ENCODE measurements at regions of chr5 and their contacts with region 1.

Region 1: GRCh38 chr5:173615884-173616576 is 420 bp downstream of the BOD1 start:
- DNase-seq: peak; percentile 66 to 86 (median 73)
- H3K4me3 ChIP-seq: peak overlapping the region; percentile 36 to 93 (median 89)
- H3K27ac ChIP-seq: peak overlapping the region; percentile 84 to 96 (median 93)
- H3K4me1 ChIP-seq: peaks cover 9 to 48% of the 10 kb centered on the region in 2 donors
- H3K27me3 ChIP-seq: no peaks in the 10 kb centered on the region
- CTCF ChIP-seq: peak; percentile 49 to 71 (median 60)
- POLR2A ChIP-seq: peak in 1 of 2 donors; percentile 55

Region 2: DNA sequence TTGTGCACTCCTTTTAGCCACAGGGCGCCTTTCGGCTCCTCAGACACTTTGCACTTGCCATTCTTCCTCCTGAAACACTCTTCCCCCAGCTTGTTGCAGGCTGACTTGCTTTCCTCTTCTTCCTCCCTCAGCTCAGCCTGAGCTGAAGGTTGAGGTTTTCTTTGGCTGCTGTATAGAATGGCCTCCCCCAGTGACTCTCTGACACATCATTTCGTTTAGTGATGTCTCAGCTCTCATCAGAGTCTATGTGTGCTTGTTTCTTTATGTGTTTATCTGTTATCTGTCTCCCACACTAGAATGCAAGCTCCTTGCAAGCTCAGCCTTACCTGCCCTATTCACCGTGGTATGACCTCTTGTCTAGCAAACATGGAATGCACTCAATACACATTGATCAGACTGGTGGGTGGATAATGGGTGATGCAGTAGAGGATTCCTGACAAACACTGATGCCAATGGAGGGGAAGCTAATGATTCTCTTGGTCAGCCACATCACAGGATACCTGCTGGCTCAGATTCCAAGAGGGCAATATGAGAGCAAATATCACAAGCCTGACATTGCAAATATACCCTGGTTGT is 174.9 kb before region 1 on chr5:
- intact Hi-C with region 1: no loop called
- DNase-seq: no peak
- H3K4me3 ChIP-seq: no peak overlapping the region
- H3K27ac ChIP-seq: no peak overlapping the region
- H3K4me1 ChIP-seq: no peaks in the 10 kb centered on the region
- H3K27me3 ChIP-seq: no peaks in the 10 kb centered on the region
- CTCF ChIP-seq: no peak
- POLR2A ChIP-seq: no peak

Region 3: GRCh38 chr5:173530547-173530946 is 85.5 kb before region 1 on chr5:
- intact Hi-C with region 1: no loop called
- DNase-seq: no peak
- H3K4me3 ChIP-seq: no peak overlapping the region
- H3K27ac ChIP-seq: no peak overlapping the region
- H3K4me1 ChIP-seq: no peaks in the 10 kb centered on the region
- H3K27me3 ChIP-seq: no peaks in the 10 kb centered on the region
- CTCF ChIP-seq: no peak
- POLR2A ChIP-seq: no peak

Region 4: GRCh38 chr5:173972925-173973615 is 357.0 kb after region 1 on chr5:
- intact Hi-C with region 1: loop called (anchors 2 kb)
- DNase-seq: peak; percentile 84 to 96 (median 92)
- H3K4me3 ChIP-seq: peak overlapping the region in 3 of 4 donors; percentile 2 to 64 (median 50)
- H3K27ac ChIP-seq: peak overlapping the region in 3 of 5 donors; percentile 51 to 80 (median 71)
- H3K4me1 ChIP-seq: peaks cover 4 to 7% of the 10 kb centered on the region in 2 donors
- H3K27me3 ChIP-seq: no peaks in the 10 kb centered on the region
- CTCF ChIP-seq: peak; percentile 88 to 97 (median 94)
- POLR2A ChIP-seq: peak in 1 of 2 donors; percentile 47

Region 5: GRCh38 chr5:173984218-173984617 is 368.2 kb after region 1 on chr5:
- intact Hi-C with region 1: loop called in 1 of 2 experiments (anchors 5 kb)
- DNase-seq: no peak
- H3K4me3 ChIP-seq: no peak overlapping the region
- H3K27ac ChIP-seq: no peak overlapping the region
- H3K4me1 ChIP-seq: no peaks in the 10 kb centered on the region
- H3K27me3 ChIP-seq: no peaks in the 10 kb centered on the region
- CTCF ChIP-seq: peak in 5 of 6 experiments; percentile 47 to 59 (median 54)
- POLR2A ChIP-seq: no peak

Region 6: DNA sequence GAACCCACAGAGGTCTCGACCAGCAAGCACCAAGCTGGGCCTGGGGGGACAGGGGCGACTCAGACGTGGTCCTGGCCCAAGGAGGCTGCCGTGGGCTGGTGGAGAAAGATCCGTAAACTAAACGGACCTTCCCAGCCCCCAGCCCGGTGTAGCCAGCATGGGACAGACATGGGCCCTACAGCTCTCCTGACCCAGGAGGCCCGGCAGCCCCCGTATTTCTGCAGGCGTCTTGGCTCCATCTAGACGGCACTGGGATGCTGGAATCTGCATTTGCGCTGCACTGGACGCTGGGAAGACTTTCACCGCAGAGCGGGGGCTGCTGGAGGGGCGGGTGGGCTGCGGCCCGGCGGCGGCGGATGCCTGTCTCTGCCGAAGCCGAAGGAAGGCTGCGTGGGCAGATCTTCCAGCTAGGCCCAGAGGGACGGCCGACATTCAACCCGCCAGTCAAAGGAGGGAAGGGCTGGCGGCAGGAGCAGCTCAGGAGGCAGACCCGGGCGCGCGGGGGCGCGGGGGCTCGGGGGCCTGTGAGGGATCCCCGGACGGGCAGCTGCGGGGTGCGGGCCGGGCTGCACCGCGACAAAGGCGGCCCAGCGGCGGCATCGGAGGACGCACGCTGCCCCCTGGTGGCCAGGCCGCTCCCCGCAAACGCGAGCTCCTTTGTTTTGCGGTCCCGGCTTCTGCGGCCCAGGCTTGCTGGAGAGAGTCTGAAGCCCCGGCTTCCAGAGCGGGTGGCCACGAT is 695.7 kb after region 1 on chr5:
- intact Hi-C with region 1: loop called in 1 of 2 experiments (anchors 5 kb)
- DNase-seq: peak; percentile 40 to 82 (median 74)
- H3K4me3 ChIP-seq: peak overlapping the region in 3 of 4 donors; percentile 18 to 55 (median 27)
- H3K27ac ChIP-seq: no peak overlapping the region
- H3K4me1 ChIP-seq: peaks cover 0 to 5% of the 10 kb centered on the region in 2 donors
- H3K27me3 ChIP-seq: no peaks in the 10 kb centered on the region
- CTCF ChIP-seq: peak; percentile 51 to 97 (median 78)
- POLR2A ChIP-seq: no peak

Measured in adrenal gland (tissue), 19 donors.